Transverse colon (tissue), 4 donors: ENCODE measurements at regions of chr2 and their contacts with region 1.

Region 1: GRCh38 chr2:226799181-226799975 is at the start of gene IRS1:
- DNase-seq: peak; percentile 73
- H3K4me3 ChIP-seq: peak within 1 kb of the TSS; percentile 46 to 91 (median 72)
- H3K27ac ChIP-seq: peak within 1 kb of the TSS; percentile 93 to 96 (median 94)
- H3K4me1 ChIP-seq: peaks cover 0 to 36% (median 25%) of the 10 kb centered on the region in 4 donors
- H3K27me3 ChIP-seq: no peaks in the 10 kb centered on the region
- CTCF ChIP-seq: peak in 1 of 5 experiments; percentile 38
- EP300 ChIP-seq: no peak
- POLR2A ChIP-seq: peak; percentile 20
- total RNA-seq, gene IRS1: 6.2 to 20.9 (median 12.8) TPM

Region 2: GRCh38 chr2:225668606-225669266 is 1130.6 kb before region 1 on chr2:
- in situ Hi-C with region 1: loop called (anchors 10 to 25 kb)
- intact Hi-C with region 1: loop called (anchors 10 kb)
- DNase-seq: no peak
- H3K4me3 ChIP-seq: no peak overlapping the region
- H3K27ac ChIP-seq: no peak overlapping the region
- H3K4me1 ChIP-seq: no peaks in the 10 kb centered on the region
- H3K27me3 ChIP-seq: no peaks in the 10 kb centered on the region
- CTCF ChIP-seq: peak; percentile 55 to 61 (median 59)
- EP300 ChIP-seq: no peak
- POLR2A ChIP-seq: no peak

Region 3: DNA sequence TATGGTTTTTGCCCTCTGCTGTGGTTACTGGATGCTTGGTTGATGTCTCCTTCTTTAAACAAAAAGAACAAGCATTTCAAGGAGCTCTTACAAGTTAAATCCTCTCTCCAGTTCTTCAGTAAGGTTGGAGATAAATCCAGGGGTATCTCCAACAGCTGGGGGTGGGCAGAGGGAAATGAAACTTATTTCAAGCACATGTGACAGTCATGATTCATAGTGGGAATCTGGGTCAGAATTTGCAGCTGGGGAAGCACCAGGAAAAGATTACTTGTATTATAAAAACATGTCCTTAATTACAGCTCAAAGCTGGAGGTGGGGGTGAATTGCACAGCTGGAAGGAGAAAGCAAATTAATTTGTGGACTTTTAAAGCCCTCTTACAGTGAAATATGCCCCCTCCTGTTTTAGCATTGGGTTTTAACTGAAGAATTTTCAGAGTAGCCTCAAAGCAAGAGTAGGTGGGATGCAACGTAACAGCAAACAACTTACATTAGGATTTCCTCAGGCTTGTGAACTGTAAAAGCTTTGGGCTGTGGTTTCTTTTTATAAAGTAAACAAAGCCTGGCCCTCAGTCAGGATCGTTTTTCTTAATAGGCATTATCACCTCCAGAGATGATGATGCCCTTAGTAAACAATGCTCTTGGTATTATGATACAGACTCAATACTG is 803.4 kb before region 1 on chr2:
- in situ Hi-C with region 1: loop called in 1 of 4 experiments (anchors 25 kb)
- intact Hi-C with region 1: no loop called
- DNase-seq: no peak
- H3K4me3 ChIP-seq: no peak overlapping the region
- H3K27ac ChIP-seq: no peak overlapping the region
- H3K4me1 ChIP-seq: no peaks in the 10 kb centered on the region
- H3K27me3 ChIP-seq: no peaks in the 10 kb centered on the region
- CTCF ChIP-seq: no peak
- EP300 ChIP-seq: no peak
- POLR2A ChIP-seq: no peak

Region 4: GRCh38 chr2:226631671-226632070 is 167.7 kb before region 1 on chr2:
- in situ Hi-C with region 1: no loop called
- intact Hi-C with region 1: loop called (anchors 5 kb)
- DNase-seq: peak; percentile 25
- H3K4me3 ChIP-seq: no peak overlapping the region
- H3K27ac ChIP-seq: peak overlapping the region in 3 of 4 donors; percentile 59 to 77 (median 76)
- H3K4me1 ChIP-seq: peaks cover 0 to 7% (median 0%) of the 10 kb centered on the region in 4 donors
- H3K27me3 ChIP-seq: no peaks in the 10 kb centered on the region
- CTCF ChIP-seq: no peak
- EP300 ChIP-seq: peak; percentile 98
- POLR2A ChIP-seq: no peak

Region 5: GRCh38 chr2:227106845-227107759 is 307.7 kb after region 1 on chr2:
- in situ Hi-C with region 1: loop called in 2 of 4 experiments (anchors 25 kb)
- intact Hi-C with region 1: no loop called
- DNase-seq: peak; percentile 53
- H3K4me3 ChIP-seq: no peak overlapping the region
- H3K27ac ChIP-seq: no peak overlapping the region
- H3K4me1 ChIP-seq: peaks cover 0 to 3% (median 0%) of the 10 kb centered on the region in 4 donors
- H3K27me3 ChIP-seq: no peaks in the 10 kb centered on the region
- CTCF ChIP-seq: peak; percentile 63 to 68 (median 67)
- EP300 ChIP-seq: no peak
- POLR2A ChIP-seq: no peak